Activated CD8-positive, alpha-beta memory T cell treated with anti-CD3 and anti-CD28 coated beads, Interleukin-2, amount 10 ng/mL, durations not matched to agents 7 days and 5 days (primary cell): ENCODE measurements at regions of chr17 and their contacts with region 1.

Region 1: GRCh38 chr17:75632863-75633485 is at the start of gene SMIM5:
- DNase-seq: peak; percentile 87
- ATAC-seq: peak; percentile 90
- H3K4me3 Mint-ChIP-seq: no peak within 1 kb of the TSS
- H3K27ac Mint-ChIP-seq: peak within 1 kb of the TSS; percentile 9
- H3K4me1 Mint-ChIP-seq: no peaks in the 10 kb centered on the region
- H3K27me3 Mint-ChIP-seq: no peaks in the 10 kb centered on the region
- total RNA-seq, gene SMIM5: 0.15 TPM in 1 of 2 experiments, not detected in the other

Region 2: DNA sequence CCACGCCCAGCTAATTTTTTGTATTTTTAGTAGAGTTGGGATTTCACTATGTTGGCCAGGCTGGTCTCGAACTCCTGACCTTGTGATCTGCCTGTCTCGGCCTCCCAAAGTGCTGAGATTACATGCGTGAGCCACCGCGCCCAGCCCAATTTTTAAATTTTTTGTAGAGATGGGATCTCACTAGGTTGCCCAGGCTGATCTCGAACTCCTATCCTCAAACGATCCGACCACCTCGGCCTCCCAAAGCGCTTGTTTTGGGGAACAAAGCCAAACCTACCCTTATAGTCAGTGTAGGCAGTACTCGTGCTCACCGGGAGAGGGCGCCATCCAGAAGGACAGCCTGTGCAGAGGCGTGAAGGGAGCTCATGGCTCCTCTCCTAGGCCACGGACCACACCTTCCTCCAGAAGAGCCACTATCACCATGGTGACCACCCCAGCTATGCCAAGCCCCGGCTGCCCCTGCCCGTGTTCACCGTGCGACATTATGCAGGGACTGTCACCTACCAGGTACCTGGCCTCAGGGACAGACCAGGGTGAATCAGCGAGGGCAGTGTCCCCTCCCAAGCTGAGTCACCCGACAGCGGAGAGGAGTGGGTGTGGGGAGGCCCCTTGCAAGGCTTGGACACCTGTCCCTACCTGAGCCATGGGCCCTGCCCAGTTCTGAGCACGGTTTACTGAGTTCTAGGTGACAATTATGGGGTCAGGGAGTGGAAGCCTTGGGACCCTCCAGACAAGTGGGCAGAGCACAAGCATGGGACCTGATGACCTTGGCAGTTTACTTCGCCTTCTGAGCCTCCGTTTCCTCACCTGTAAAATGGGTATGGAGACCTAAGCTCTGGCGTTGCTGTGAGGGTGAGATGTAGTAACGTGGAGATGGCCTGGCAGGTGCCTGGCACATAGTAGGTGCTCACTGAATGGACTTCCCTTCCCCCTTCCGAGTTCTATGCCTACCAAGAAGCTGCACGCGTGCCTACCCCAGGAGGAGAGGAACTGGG is 31.6 kb before region 1 on chr17:
- CTCF ChIA-PET with region 1: interaction called, 27 read pairs
- DNase-seq: peak; percentile 79
- ATAC-seq: peak; percentile 83
- H3K4me3 Mint-ChIP-seq: no peak overlapping the region
- H3K27ac Mint-ChIP-seq: no peak overlapping the region
- H3K4me1 Mint-ChIP-seq: no peaks in the 10 kb centered on the region
- H3K27me3 Mint-ChIP-seq: no peaks in the 10 kb centered on the region

Region 3: DNA sequence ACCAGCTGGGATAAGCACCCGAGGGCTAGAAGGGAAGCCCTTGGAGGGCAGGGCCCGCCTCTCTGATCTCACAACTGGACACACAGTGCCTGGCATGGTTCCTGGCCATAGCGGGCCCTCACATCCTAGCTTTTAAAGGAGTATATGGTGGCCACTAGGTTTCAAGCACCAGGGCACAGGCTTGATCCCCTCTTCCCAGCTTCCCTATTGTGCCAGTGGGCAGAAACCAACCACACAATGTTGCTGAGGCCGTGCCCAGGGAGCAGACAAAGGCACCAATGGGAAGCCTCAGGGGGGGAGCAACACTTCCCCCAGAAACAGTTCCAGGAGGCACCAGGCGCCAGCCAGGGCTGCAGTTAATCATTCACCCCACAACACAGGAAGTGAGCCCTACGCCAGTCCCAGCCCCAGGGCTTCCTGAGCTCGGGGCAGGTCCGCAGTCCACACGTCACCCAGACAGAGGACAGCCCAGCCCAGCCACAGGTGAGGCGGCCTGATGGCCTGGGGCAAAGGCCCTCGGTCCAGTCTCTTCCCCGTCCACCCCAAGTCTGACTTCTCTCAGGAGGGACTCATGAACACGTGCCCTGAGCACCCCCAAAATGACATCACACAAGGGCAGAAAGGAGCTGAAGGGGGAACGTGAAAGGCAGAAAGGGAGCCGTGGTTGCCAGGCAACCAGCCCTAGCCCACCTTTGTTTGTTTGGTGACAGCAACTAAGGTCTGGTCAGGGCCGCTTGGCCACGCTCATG is 13.1 kb after region 1 on chr17:
- CTCF ChIA-PET with region 1: interaction called, 114 read pairs
- DNase-seq: peak; percentile 57
- ATAC-seq: peak; percentile 92
- H3K4me3 Mint-ChIP-seq: no peak overlapping the region
- H3K27ac Mint-ChIP-seq: peak overlapping the region; percentile 86
- H3K4me1 Mint-ChIP-seq: peaks cover 21% of the 10 kb centered on the region
- H3K27me3 Mint-ChIP-seq: no peaks in the 10 kb centered on the region

Region 4: DNA sequence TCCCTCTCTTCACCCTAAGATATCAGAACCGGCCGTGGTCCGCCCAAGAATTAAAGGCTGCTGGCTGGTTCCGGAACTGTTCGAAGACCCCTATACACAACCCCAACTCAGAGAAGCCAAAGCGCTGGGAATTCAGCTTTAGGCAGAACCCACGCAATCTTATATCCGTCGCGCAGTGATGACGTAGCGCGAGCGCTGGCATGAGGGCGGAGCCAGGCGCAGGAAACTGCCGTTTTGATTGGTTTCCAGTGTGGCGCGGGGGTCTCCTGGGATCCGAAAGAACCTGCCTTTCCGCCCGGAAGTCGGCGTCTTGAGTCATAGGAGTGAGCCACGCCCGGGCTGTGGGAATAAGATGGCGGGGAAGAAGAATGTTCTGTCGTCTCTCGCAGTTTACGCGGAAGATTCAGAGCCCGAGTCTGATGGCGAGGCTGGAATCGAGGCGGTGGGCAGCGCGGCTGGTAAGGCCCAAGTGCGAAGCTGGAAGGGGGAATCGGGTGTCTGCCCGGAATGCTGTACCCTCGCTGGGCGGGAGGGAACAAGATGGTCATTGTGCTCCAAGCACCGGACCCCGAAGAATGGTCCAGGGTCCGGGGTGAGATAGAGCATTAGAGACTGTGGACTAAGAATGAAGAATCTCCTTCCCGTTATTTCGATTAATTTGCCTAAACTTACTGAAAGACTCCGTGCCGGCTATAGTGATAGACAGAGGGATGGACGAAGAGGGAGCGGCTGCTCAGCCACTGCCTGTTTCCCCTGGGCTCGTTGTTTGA is 34.2 kb after region 1 on chr17 and contains the starts of genes RECQL5 and SAP30BP:
- CTCF ChIA-PET with region 1: interaction called, 20 read pairs
- DNase-seq: peak; percentile 99
- ATAC-seq: peak; percentile 100
- H3K4me3 Mint-ChIP-seq: no peak within 1 kb of the TSS
- H3K27ac Mint-ChIP-seq: peak within 1 kb of the TSS; percentile 64
- H3K4me1 Mint-ChIP-seq: peaks cover 22% of the 10 kb centered on the region
- H3K27me3 Mint-ChIP-seq: no peaks in the 10 kb centered on the region
- total RNA-seq, gene RECQL5: 35.5 to 46.2 TPM
- total RNA-seq, gene SAP30BP: 100.0 to 106 TPM

Region 5: DNA sequence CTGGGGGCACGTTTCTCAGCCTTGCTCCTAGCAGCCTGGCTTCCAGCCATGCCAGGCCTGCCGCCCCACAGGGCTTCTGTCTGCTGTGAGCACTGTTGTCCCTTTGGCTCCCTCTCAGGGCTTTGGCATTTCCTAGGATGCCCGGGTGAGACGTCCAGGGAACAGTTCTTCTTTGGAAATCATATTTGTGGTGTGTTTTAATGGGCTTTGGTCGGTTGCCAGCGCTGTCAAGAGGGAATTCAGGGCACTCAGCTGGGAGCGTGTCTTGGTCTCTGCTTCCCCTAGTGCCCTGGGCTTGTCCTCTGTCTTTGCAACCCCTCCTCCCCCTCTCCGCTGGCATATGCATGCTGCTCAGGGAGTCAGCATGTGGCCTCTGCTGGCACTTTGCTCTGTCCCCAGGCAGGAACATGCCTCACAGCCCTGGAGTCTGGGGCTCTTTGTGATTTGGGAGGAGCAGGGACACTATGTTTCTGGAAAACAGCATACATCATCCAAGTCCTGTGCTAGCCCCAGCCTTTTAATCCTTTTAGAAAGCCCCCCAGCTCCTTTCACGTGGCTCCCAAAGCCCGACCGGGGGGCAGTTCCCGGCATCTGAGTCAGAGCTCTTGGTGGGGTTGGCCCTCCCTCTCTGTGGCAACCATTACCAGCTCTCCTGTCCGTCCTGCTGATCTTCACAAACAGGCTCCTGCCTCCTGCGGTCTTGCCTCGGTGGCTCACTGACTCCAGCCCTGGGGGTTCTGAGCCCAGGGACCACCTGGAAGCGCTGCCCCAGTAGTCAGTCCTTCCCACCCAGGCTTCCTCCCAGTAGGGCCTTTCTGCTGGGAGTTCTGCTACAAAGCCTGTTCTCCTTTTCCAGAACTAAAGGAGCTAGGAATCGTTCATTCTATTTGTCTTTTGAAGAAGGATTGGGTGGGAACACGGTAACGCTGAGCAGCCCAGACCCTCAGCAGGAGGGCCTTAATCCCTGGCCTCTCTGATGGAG is 60.8 kb after region 1 on chr17:
- CTCF ChIA-PET with region 1: interaction called, 11 read pairs
- DNase-seq: no peak
- ATAC-seq: no peak
- H3K4me3 Mint-ChIP-seq: no peak overlapping the region
- H3K27ac Mint-ChIP-seq: no peak overlapping the region
- H3K4me1 Mint-ChIP-seq: peaks cover 27% of the 10 kb centered on the region
- H3K27me3 Mint-ChIP-seq: no peaks in the 10 kb centered on the region